ENCODE measurements at regions of chr6 and their contacts with region 1.

Region 1: DNA sequence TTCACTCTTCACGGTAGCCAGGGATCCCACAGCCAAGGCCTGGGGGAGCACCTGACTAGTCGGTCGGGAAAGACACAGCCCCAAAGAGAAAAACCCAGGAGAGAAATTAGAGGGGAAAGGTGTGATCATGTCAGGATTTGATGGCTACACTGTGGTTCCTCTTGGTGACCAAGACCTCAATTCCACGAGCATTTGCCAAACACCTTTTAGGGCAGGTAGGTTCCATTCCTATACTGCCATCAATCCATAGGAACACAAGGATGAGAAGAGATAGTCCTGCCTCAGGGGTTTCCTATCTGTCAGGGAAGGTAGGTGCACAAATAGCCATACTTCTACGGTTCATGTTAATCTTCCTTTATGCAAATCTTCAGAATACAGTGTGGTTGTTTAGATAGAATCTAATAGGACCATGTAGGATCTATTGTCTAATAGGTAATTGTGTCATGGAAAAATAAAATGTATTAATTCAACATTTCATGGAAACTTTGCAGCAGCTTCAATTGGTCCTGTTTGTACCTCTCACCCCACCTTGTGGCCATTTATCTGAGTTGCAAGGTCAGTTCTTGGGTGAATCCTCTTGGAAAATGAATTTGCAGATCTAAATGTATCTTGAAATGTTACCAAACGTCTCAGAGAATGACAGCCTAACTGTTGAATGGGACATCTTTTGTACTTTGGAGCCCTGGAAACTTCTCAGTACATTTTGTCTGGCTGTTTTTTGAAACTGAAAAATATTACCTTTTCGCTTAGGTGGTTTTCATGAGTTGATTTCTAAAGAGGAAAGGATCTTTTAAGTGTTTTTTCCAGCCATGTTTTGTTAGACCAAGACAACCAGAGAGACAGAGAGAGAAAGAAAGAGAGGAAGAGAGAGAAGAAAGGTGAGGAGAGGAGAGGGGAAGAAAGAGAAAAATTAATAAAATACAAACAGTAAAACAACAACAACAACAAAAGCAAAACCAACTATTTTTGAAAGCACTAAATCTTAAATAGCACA is 33.7 kb upstream of the IYD start:
- ATAC-seq: peak in 5 of 8 experiments; percentile 34 to 56 (median 48)
- H3K4me3 ChIP-seq: no peak overlapping the region
- H3K27ac ChIP-seq: no peak overlapping the region
- H3K4me1 ChIP-seq: peaks cover 0 to 3% of the 10 kb centered on the region in 2 donors

Region 2: DNA sequence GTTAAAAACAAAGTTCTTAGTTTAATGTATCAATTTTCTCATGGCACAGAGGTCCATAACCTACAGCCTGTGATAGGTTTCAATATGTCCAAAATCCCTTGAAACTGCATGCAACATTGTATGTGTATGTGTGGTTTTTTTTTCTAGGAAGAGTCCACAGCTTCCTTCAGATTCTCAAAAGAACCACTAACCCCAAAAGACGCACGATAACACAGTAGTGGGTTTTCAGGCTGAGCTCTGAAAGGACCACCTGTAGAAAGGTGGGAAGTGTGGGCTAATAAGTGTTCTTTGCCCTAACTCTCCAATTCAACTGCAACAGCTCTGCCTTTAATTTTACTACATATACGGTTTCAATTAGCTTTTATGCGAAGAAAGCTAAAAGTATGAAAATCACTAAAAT is 675.1 kb before region 1 on chr6:
- in situ Hi-C with region 1: no loop called
- ATAC-seq: no peak
- H3K4me3 ChIP-seq: no peak overlapping the region
- H3K27ac ChIP-seq: no peak overlapping the region
- H3K4me1 ChIP-seq: no peaks in the 10 kb centered on the region

Region 3: GRCh38 chr6:150068720-150069648 is 266.1 kb before region 1 on chr6 and contains the start of gene ULBP3:
- in situ Hi-C with region 1: loop called in 2 of 9 experiments (anchors 25 kb)
- ATAC-seq: peak; percentile 81 to 93 (median 88)
- H3K4me3 ChIP-seq: peak within 1 kb of the TSS; percentile 43 to 52 (median 50)
- H3K27ac ChIP-seq: peak within 1 kb of the TSS; percentile 48 to 77
- H3K4me1 ChIP-seq: peaks cover 10 to 14% of the 10 kb centered on the region in 2 donors
- total RNA-seq, gene ULBP3: 5.0 to 43.3 (median 13.1) TPM

Region 4: GRCh38 chr6:150079604-150080003 is 255.5 kb before region 1 on chr6:
- in situ Hi-C with region 1: loop called in 7 of 9 experiments (anchors 10 to 25 kb)
- ATAC-seq: peak in 6 of 8 experiments; percentile 38 to 74 (median 46)
- H3K4me3 ChIP-seq: no peak overlapping the region
- H3K27ac ChIP-seq: no peak overlapping the region
- H3K4me1 ChIP-seq: peaks cover 0 to 6% of the 10 kb centered on the region in 2 donors

Measured in motor neuron (in vitro differentiated cells).